Naive thymus-derived CD4-positive, alpha-beta T cell (primary cell): ENCODE measurements at regions of chr12 and their contacts with region 1.

Region 1: DNA sequence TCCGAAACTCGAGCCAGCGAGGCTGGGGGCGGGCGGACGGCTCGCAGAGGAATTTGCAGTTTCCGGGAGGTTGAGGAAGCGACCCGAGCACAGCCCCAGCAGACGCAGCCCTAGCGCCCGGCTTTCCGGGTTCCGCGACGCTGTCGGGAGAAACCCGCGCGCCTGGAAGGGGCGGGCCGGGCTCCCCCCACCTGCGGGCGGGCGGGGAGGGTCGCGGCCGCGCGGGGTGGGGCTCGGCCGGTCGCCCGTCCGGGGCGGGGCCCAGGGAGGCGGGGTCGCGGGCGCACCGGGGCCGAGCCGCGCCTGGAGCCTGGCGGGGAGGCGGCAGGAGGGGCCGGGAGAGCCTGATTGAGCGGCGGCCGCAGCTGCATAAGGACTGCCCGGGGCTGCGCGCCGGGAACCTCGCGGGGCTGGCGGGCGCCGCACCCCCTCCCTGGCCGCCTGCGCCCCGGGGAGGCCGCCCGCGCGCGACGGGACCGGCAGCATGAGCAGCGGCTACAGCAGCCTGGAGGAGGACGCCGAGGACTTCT is at the start of gene RASSF3:
- DNase-seq: peak; percentile 58 to 85 (median 75)
- ATAC-seq: peak; percentile 76
- H3K4me3 ChIP-seq: peak within 1 kb of the TSS; percentile 93
- H3K4me3 Mint-ChIP-seq: peak within 1 kb of the TSS; percentile 93 to 100 (median 97)
- H3K27ac ChIP-seq: peak within 1 kb of the TSS; percentile 89
- H3K27ac Mint-ChIP-seq: peak within 1 kb of the TSS; percentile 90 to 97 (median 95)
- H3K4me1 ChIP-seq: peaks cover 28 to 29% of the 10 kb centered on the region in 2 donors
- H3K4me1 Mint-ChIP-seq: peaks cover 30 to 50% (median 41%) of the 10 kb centered on the region in 7 donors
- H3K27me3 ChIP-seq: no peaks in the 10 kb centered on the region
- H3K27me3 Mint-ChIP-seq: no peaks in the 10 kb centered on the region
- total RNA-seq, gene RASSF3: 79.0 to 200 (median 107) TPM

Region 2: GRCh38 chr12:64059685-64060084 is 550.5 kb before region 1 on chr12:
- CTCF ChIA-PET with region 1: no interaction called
- POLR2A ChIA-PET with region 1: no interaction called
- intact Hi-C with region 1: no loop called
- DNase-seq: no peak
- ATAC-seq: no peak
- H3K4me3 ChIP-seq: no peak overlapping the region
- H3K4me3 Mint-ChIP-seq: no peak overlapping the region
- H3K27ac ChIP-seq: no peak overlapping the region
- H3K27ac Mint-ChIP-seq: no peak overlapping the region
- H3K4me1 ChIP-seq: no peaks in the 10 kb centered on the region
- H3K4me1 Mint-ChIP-seq: no peaks in the 10 kb centered on the region
- H3K27me3 ChIP-seq: no peaks in the 10 kb centered on the region
- H3K27me3 Mint-ChIP-seq: peaks cover 6 to 13% (median 11%) of the 10 kb centered on the region in 5 donors

Region 3: GRCh38 chr12:64390275-64390851 is 219.9 kb before region 1 on chr12 and contains the start of gene C12orf56:
- CTCF ChIA-PET with region 1: no interaction called
- POLR2A ChIA-PET with region 1: no interaction called
- intact Hi-C with region 1: no loop called
- DNase-seq: peak in 4 of 9 donors; percentile 14 to 37 (median 16)
- ATAC-seq: peak; percentile 56
- H3K4me3 ChIP-seq: peak within 1 kb of the TSS; percentile 58
- H3K4me3 Mint-ChIP-seq: peak within 1 kb of the TSS; percentile 81 to 90 (median 86)
- H3K27ac ChIP-seq: no peak within 1 kb of the TSS
- H3K27ac Mint-ChIP-seq: peak within 1 kb of the TSS in 6 of 9 donors; percentile 62 to 88 (median 69)
- H3K4me1 ChIP-seq: peaks cover 0 to 7% of the 10 kb centered on the region in 2 donors
- H3K4me1 Mint-ChIP-seq: peaks cover 12 to 39% (median 25%) of the 10 kb centered on the region in 7 donors
- H3K27me3 ChIP-seq: no peaks in the 10 kb centered on the region
- H3K27me3 Mint-ChIP-seq: peaks cover 0 to 22% (median 0%) of the 10 kb centered on the region in 5 donors
- total RNA-seq, gene C12orf56: 0.10 to 0.34 TPM in 2 of 5 experiments, not detected in the others

Region 4: GRCh38 chr12:64451687-64452558 is 158.3 kb before region 1 on chr12 and contains the start of gene TBK1:
- CTCF ChIA-PET with region 1: no interaction called
- POLR2A ChIA-PET with region 1: no interaction called
- intact Hi-C with region 1: loop called (anchors 2 kb)
- DNase-seq: peak in 8 of 9 donors; percentile 21 to 80 (median 34)
- ATAC-seq: peak; percentile 78
- H3K4me3 ChIP-seq: peak within 1 kb of the TSS; percentile 61
- H3K4me3 Mint-ChIP-seq: peak within 1 kb of the TSS; percentile 90 to 99 (median 94)
- H3K27ac ChIP-seq: peak within 1 kb of the TSS; percentile 74
- H3K27ac Mint-ChIP-seq: peak within 1 kb of the TSS; percentile 86 to 95 (median 94)
- H3K4me1 ChIP-seq: peaks cover 19 to 24% of the 10 kb centered on the region in 2 donors
- H3K4me1 Mint-ChIP-seq: peaks cover 20 to 54% (median 41%) of the 10 kb centered on the region in 7 donors
- H3K27me3 ChIP-seq: no peaks in the 10 kb centered on the region
- H3K27me3 Mint-ChIP-seq: no peaks in the 10 kb centered on the region
- total RNA-seq, gene TBK1: 9.0 to 34.0 (median 12.1) TPM

Region 5: GRCh38 chr12:64571411-64571810 is 38.8 kb before region 1 on chr12:
- CTCF ChIA-PET with region 1: no interaction called
- POLR2A ChIA-PET with region 1: interaction called, 5 read pairs
- intact Hi-C with region 1: loop called in 1 of 2 experiments (anchors 1 kb)
- DNase-seq: peak in 7 of 9 donors; percentile 10 to 64 (median 54)
- ATAC-seq: peak; percentile 62
- H3K4me3 ChIP-seq: no peak overlapping the region
- H3K4me3 Mint-ChIP-seq: peak overlapping the region in 7 of 10 donors; percentile 2 to 57 (median 40)
- H3K27ac ChIP-seq: no peak overlapping the region
- H3K27ac Mint-ChIP-seq: peak overlapping the region in 8 of 9 donors; percentile 7 to 87 (median 65)
- H3K4me1 ChIP-seq: peaks cover 0 to 23% of the 10 kb centered on the region in 2 donors
- H3K4me1 Mint-ChIP-seq: peaks cover 15 to 60% (median 54%) of the 10 kb centered on the region in 7 donors
- H3K27me3 ChIP-seq: no peaks in the 10 kb centered on the region
- H3K27me3 Mint-ChIP-seq: no peaks in the 10 kb centered on the region

Region 6: DNA sequence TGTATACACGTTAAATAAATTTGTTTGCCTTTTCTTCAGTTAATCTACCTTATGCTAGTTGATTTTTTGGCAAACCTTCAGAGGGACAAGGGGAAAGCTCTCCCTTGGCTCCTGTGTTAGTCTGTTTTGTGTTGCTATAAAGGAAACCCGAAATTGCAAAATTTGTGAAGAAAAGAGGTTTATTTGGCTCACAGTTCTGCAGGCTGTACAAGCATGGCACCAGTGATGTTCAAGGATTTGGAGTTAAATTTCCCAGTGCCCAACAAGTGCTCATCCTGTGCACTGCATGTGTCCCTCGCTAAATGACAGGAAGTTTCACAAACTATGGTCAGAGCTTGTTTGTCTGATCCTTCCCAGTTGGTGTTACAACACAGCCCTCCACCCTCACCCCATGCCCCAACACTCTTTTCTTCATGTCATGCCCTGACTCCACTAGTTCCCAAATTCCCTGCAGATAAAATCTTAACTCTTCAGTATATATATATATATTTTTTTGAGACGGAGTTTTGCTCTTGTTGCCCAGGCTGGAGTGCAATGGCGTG is 13.9 kb before region 1 on chr12:
- CTCF ChIA-PET with region 1: interaction called, 6 read pairs
- POLR2A ChIA-PET with region 1: interaction called, 73 read pairs
- intact Hi-C with region 1: loop called (anchors 1 kb)
- DNase-seq: no peak
- ATAC-seq: peak; percentile 50
- H3K4me3 ChIP-seq: no peak overlapping the region
- H3K4me3 Mint-ChIP-seq: peak overlapping the region in 8 of 10 donors; percentile 4 to 65 (median 32)
- H3K27ac ChIP-seq: no peak overlapping the region
- H3K27ac Mint-ChIP-seq: peak overlapping the region in 6 of 9 donors; percentile 26 to 88 (median 60)
- H3K4me1 ChIP-seq: peaks cover 9 to 41% of the 10 kb centered on the region in 2 donors
- H3K4me1 Mint-ChIP-seq: peaks cover 27 to 57% (median 49%) of the 10 kb centered on the region in 7 donors
- H3K27me3 ChIP-seq: no peaks in the 10 kb centered on the region
- H3K27me3 Mint-ChIP-seq: peaks cover 0 to 4% (median 0%) of the 10 kb centered on the region in 5 donors

Region 7: DNA sequence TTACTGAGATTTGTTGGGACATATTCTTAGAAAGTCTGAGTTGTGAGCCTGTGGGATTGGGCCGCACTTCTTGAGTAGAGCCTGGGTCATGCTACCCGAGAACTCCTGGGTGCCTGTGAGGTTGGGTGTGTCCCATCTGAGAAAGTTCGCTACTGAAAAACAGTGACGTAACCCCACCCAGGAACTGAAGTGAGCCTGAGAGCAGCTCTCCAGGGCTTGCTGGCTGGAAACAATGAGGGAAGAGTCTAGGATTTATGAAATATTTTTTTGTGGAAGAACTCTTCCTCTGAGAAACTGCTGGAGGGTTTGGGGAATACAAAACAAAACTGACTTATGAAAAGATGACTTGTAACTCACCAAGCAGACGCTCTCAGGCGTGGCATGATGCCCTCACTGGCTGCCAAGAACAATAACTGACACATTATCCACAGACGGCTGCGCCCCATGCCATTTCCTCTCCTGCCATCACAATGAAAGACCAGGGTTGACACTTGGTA is 69.3 kb after region 1 on chr12:
- CTCF ChIA-PET with region 1: interaction called, 9 read pairs
- POLR2A ChIA-PET with region 1: interaction called, 900 read pairs
- intact Hi-C with region 1: loop called in 1 of 2 experiments (anchors 2 kb)
- DNase-seq: peak in 8 of 9 donors; percentile 33 to 83 (median 81)
- ATAC-seq: peak; percentile 76
- H3K4me3 ChIP-seq: peak overlapping the region; percentile 37
- H3K4me3 Mint-ChIP-seq: peak overlapping the region; percentile 64 to 85 (median 74)
- H3K27ac ChIP-seq: peak overlapping the region; percentile 76
- H3K27ac Mint-ChIP-seq: peak overlapping the region; percentile 94 to 100 (median 97)
- H3K4me1 ChIP-seq: peaks cover 93 to 97% of the 10 kb centered on the region in 2 donors
- H3K4me1 Mint-ChIP-seq: peaks cover 60 to 99% (median 92%) of the 10 kb centered on the region in 7 donors
- H3K27me3 ChIP-seq: no peaks in the 10 kb centered on the region
- H3K27me3 Mint-ChIP-seq: no peaks in the 10 kb centered on the region

Region 8: GRCh38 chr12:65169320-65170208 is 559.4 kb after region 1 on chr12 and contains the start of gene LEMD3:
- CTCF ChIA-PET with region 1: no interaction called
- POLR2A ChIA-PET with region 1: interaction called, 3 read pairs
- intact Hi-C with region 1: loop called in 1 of 2 experiments (anchors 5 kb)
- DNase-seq: peak; percentile 87 to 97 (median 94)
- ATAC-seq: peak; percentile 95
- H3K4me3 ChIP-seq: peak within 1 kb of the TSS; percentile 84
- H3K4me3 Mint-ChIP-seq: peak within 1 kb of the TSS in 8 of 10 donors; percentile 92 to 100 (median 99)
- H3K27ac ChIP-seq: peak within 1 kb of the TSS; percentile 93
- H3K27ac Mint-ChIP-seq: peak within 1 kb of the TSS; percentile 94 to 100 (median 99)
- H3K4me1 ChIP-seq: peaks cover 33 to 40% of the 10 kb centered on the region in 2 donors
- H3K4me1 Mint-ChIP-seq: peaks cover 10 to 35% (median 23%) of the 10 kb centered on the region in 7 donors
- H3K27me3 ChIP-seq: no peaks in the 10 kb centered on the region
- H3K27me3 Mint-ChIP-seq: peaks cover 0 to 5% (median 2%) of the 10 kb centered on the region in 5 donors
- total RNA-seq, gene LEMD3: 37.8 to 60.1 (median 52.8) TPM